K562 (cell line): ENCODE measurements at regions of chr13 and their contacts with region 1.

Region 1: DNA sequence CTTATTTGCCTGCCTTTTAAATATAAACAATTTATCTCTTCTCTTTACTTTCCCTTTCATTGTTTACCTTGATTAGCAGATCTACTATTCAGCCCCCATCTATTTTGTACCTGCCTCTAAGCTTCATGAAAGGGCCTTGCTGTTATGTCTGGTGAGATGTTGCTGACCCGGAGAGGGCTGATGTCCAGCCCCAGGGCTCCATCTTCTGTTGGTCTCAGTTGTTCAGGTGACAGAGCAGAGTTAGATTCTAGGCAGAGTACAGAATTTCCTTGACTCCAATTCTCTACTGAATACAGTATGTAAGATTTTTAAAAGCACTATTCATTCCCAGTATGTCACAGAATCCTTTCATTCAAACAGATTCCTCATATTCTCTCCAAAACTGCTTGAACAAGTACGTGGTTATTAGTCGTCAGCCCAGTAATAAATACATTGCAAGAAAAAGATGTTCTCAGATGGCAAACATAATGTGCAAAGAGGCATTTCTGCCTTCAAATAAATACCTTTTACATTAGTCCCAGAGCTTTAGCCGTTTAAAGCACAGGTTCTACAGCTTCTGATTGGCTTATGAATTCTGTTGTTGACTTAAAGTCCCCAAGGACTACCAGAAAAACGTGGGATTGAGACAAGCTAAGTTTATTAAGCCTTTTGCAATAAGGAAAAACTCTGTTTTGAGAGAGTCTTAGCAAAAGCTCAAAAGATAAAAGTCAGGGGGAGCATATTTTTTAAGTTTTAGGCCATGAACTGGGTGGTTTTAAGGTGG is 159.1 kb downstream of the GPC5 start:
- DNase-seq: peak in 1 of 4 experiments; percentile 48
- ATAC-seq: peak; percentile 83
- H3K4me3 ChIP-seq: no peak overlapping the region
- H3K27ac ChIP-seq: no peak overlapping the region
- H3K4me1 ChIP-seq: no peaks in the 10 kb centered on the region
- H3K27me3 ChIP-seq: no peaks in the 10 kb centered on the region
- CTCF ChIP-seq: peak; percentile 34 to 55 (median 35); a peak in 4 of 6 replicates
- EP300 ChIP-seq: no peak
- POLR2A ChIP-seq: no peak
- RAD21 ChIP-seq: peak in 1 of 2 experiments; percentile 81; a peak in 2 of 4 replicates

Region 2: GRCh38 chr13:91086936-91087716 is 470.4 kb before region 1 on chr13:
- CTCF ChIA-PET with region 1: no interaction called
- POLR2A ChIA-PET with region 1: no interaction called
- in situ Hi-C with region 1: no loop called
- intact Hi-C with region 1: no loop called
- DNase-seq: no peak
- ATAC-seq: no peak
- H3K4me3 ChIP-seq: no peak overlapping the region
- H3K27ac ChIP-seq: no peak overlapping the region
- H3K4me1 ChIP-seq: no peaks in the 10 kb centered on the region
- H3K27me3 ChIP-seq: no peaks in the 10 kb centered on the region
- CTCF ChIP-seq: no peak
- EP300 ChIP-seq: no peak
- POLR2A ChIP-seq: no peak
- RAD21 ChIP-seq: no peak

Region 3: DNA sequence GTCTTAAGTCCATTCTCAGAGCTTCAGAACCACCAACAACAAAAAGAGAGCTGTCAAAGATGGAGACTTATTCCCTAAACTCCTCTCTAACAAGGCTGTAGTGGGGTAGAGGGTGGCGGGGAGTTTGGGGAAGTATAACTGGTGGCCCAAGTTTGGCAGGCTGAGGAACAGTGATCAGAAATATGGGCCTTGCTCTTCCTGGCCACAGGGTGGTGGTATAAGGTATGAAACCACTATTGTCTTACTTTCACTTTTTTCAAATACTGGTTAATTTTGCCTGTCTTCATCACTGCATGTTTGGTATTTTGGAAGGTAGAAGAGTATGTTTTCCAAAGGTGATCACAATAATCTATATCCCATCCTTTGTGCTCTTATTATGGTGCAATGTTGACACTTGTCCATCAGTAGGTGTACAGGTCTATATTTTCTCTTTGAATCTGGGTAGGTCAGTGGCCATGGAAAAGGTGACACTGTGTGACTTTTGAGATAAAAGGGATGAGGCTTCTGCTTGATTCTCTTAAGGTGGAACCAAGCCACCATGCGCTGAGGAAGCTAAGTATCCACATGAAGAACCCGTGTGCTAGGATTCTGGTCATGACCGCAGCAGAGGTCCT is 182.3 kb before region 1 on chr13:
- CTCF ChIA-PET with region 1: no interaction called
- POLR2A ChIA-PET with region 1: interaction called, 3 read pairs
- in situ Hi-C with region 1: no loop called
- intact Hi-C with region 1: loop called (anchors 2 kb)
- DNase-seq: peak; percentile 69 to 83 (median 78)
- ATAC-seq: peak; percentile 94
- H3K4me3 ChIP-seq: no peak overlapping the region
- H3K27ac ChIP-seq: no peak overlapping the region
- H3K4me1 ChIP-seq: no peaks in the 10 kb centered on the region
- H3K27me3 ChIP-seq: no peaks in the 10 kb centered on the region; a peak in 1 of 5 replicates
- CTCF ChIP-seq: peak in 1 of 3 experiments; percentile 93; a peak in 2 of 6 replicates
- EP300 ChIP-seq: no peak
- POLR2A ChIP-seq: no peak
- RAD21 ChIP-seq: no peak

Region 4: GRCh38 chr13:91381371-91381770 is 176.1 kb before region 1 on chr13:
- CTCF ChIA-PET with region 1: no interaction called
- POLR2A ChIA-PET with region 1: no interaction called
- in situ Hi-C with region 1: no loop called
- intact Hi-C with region 1: loop called (anchors 1 kb)
- DNase-seq: peak in 1 of 4 experiments; percentile 60
- ATAC-seq: peak; percentile 55; the same call in 2 of the 3 replicates
- H3K4me3 ChIP-seq: no peak overlapping the region
- H3K27ac ChIP-seq: no peak overlapping the region
- H3K4me1 ChIP-seq: no peaks in the 10 kb centered on the region
- H3K27me3 ChIP-seq: no peaks in the 10 kb centered on the region
- CTCF ChIP-seq: peak in 1 of 3 experiments; percentile 81; a peak in 2 of 6 replicates
- EP300 ChIP-seq: no peak
- POLR2A ChIP-seq: no peak
- RAD21 ChIP-seq: no peak

Region 5: DNA sequence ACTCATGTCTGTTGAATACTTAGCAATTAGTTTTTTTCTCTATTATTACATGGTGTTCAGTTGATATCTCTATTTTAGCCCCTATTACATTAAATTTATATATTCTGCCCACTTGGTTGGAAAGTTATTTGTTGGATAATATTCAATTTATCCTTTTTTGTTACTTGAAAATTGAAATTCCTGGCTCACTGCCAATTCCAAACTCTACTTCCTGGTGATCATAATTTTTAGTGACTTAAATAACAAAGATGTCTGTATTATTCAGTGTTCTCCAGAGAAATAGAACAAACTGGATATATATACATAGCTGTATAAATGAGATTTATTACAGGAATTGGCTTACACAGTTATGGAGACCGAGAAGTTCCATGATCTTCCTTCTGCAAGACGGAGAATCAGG is 65.5 kb before region 1 on chr13:
- CTCF ChIA-PET with region 1: no interaction called
- POLR2A ChIA-PET with region 1: no interaction called
- in situ Hi-C with region 1: no loop called
- intact Hi-C with region 1: loop called (anchors 1 kb)
- DNase-seq: no peak
- ATAC-seq: no peak
- H3K4me3 ChIP-seq: no peak overlapping the region
- H3K27ac ChIP-seq: no peak overlapping the region
- H3K4me1 ChIP-seq: no peaks in the 10 kb centered on the region
- H3K27me3 ChIP-seq: no peaks in the 10 kb centered on the region
- CTCF ChIP-seq: no peak
- EP300 ChIP-seq: no peak
- POLR2A ChIP-seq: no peak
- RAD21 ChIP-seq: no peak

Region 6: GRCh38 chr13:91747186-91747585 is 189.7 kb after region 1 on chr13:
- CTCF ChIA-PET with region 1: no interaction called
- POLR2A ChIA-PET with region 1: no interaction called
- in situ Hi-C with region 1: no loop called
- intact Hi-C with region 1: no loop called
- DNase-seq: no peak
- ATAC-seq: no peak
- H3K4me3 ChIP-seq: no peak overlapping the region
- H3K27ac ChIP-seq: no peak overlapping the region
- H3K4me1 ChIP-seq: no peaks in the 10 kb centered on the region
- H3K27me3 ChIP-seq: no peaks in the 10 kb centered on the region
- CTCF ChIP-seq: no peak
- EP300 ChIP-seq: no peak
- POLR2A ChIP-seq: no peak
- RAD21 ChIP-seq: no peak